Vagina (tissue), 2 donors: ENCODE measurements at regions of chr9 and their contacts with region 1.

Region 1: DNA sequence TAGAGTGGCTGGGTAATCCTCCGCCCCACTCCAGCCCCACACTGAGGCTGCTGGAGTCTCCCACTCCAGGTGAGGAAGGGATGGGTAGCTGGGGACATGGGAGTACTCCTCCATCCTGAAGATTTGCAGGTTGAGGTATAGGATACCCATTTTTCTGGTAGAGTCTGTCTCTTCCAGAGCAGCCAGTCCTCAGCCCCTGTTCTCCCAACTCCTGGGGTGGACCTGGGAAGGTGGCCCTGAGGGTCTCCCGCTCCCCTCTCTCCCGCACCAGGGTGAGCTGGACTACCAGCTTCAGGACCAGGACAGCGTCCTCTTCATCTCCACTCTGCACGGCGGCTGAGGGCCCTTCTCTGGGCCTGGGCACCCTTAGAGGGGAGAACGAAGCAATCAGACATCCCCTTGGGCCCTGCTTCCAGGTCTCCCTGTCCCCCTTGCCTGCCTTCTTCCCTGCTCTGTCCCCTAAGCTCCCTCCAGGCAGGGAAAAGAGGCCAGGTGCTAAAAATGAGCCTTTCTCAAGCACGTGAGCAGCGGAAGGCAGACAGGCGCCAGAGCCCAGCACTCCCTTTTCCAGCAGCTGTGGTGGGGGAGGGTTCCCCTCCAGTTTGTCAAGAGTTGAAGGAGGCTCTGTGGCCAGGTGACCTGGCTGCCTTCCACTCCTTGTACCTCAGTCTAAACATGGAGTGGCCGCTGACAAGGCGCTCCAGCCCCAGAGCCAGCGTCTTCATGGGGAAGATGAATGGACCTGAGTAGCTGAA is 18.4 kb downstream of the URM1 start:
- DNase-seq: no peak
- H3K4me3 ChIP-seq: no peak overlapping the region
- H3K27ac ChIP-seq: no peak overlapping the region
- H3K4me1 ChIP-seq: no peaks in the 10 kb centered on the region
- H3K27me3 ChIP-seq: no peaks in the 10 kb centered on the region
- CTCF ChIP-seq: no peak
- POLR2A ChIP-seq: no peak

Region 2: DNA sequence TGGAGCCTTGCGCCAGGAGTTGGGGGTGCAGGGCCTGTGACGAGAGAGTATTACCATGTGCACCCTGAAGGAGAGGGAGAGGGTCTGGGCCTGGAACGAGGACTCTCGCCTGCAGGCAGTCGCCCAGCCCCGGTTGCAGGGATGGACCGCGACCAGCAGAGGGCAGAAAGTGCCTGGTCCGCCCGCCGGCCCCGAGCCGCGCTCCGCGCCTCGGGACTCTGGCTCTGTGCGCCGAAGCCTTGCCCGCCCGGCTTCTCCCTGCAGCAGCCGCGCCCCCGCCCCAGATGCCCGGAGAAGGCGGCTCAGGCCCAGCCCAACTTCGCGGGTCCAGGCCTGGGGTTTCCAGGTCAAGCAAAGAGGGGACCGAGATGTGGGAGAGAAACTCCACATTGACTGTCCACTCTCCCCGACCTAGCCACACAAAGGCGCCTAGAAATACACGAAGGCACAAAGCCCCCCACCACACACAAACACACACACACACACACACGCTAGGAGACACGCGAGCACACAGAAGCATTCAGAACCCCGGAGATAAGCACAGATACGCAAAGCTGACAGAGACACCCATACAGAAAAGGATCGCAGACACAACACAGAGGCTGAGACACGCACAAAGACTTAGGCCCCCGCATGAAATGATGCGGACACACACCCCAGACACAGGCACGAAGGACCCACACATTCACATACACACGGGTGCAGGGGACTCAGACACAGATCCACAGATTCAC is 1777.8 kb before region 1 on chr9:
- intact Hi-C with region 1: loop called (anchors 5 kb)
- DNase-seq: no peak
- H3K4me3 ChIP-seq: peak overlapping the region in 1 of 2 donors; percentile 42
- H3K27ac ChIP-seq: no peak overlapping the region
- H3K4me1 ChIP-seq: peaks cover 33% of the 10 kb centered on the region
- H3K27me3 ChIP-seq: peaks cover 27% of the 10 kb centered on the region
- CTCF ChIP-seq: peak; percentile 56 to 68 (median 58)
- POLR2A ChIP-seq: no peak

Region 3: DNA sequence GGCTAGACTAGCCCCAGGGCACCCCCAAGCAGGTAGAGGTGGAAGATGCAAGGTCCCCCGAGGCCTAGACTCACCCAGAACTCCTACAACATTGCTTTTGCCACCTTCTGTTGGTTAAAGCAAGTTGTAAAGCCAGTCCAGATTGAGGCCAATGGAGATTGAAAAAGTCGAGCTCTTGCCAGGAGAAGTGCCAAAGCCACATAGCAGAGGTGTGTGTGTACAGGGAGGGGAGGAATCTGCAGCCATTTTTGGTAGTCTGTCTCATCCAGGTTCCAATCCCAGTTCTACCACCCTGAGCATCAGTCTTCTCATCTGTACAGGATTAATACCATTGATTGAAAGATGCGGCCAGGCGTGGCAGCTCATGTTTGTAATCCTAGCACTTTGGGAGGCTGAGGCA is 30.7 kb before region 1 on chr9:
- intact Hi-C with region 1: no loop called
- DNase-seq: no peak
- H3K4me3 ChIP-seq: no peak overlapping the region
- H3K27ac ChIP-seq: no peak overlapping the region
- H3K4me1 ChIP-seq: peaks cover 19% of the 10 kb centered on the region
- H3K27me3 ChIP-seq: no peaks in the 10 kb centered on the region
- CTCF ChIP-seq: no peak
- POLR2A ChIP-seq: no peak